Activated B cell treated with CpG ODN at 0.5 μM for 24 hours (primary cell): ENCODE measurements at regions of chr10 and their contacts with region 1.

Region 1: GRCh38 chr10:101441541-101442455 is 87.8 kb downstream of the BTRC start:
- DNase-seq: no peak
- ATAC-seq: peak; percentile 77
- H3K4me3 Mint-ChIP-seq: no peak overlapping the region
- H3K27ac Mint-ChIP-seq: no peak overlapping the region
- H3K4me1 Mint-ChIP-seq: peaks cover 3% of the 10 kb centered on the region
- H3K27me3 Mint-ChIP-seq: no peaks in the 10 kb centered on the region
- CTCF ChIP-seq: no peak

Region 2: DNA sequence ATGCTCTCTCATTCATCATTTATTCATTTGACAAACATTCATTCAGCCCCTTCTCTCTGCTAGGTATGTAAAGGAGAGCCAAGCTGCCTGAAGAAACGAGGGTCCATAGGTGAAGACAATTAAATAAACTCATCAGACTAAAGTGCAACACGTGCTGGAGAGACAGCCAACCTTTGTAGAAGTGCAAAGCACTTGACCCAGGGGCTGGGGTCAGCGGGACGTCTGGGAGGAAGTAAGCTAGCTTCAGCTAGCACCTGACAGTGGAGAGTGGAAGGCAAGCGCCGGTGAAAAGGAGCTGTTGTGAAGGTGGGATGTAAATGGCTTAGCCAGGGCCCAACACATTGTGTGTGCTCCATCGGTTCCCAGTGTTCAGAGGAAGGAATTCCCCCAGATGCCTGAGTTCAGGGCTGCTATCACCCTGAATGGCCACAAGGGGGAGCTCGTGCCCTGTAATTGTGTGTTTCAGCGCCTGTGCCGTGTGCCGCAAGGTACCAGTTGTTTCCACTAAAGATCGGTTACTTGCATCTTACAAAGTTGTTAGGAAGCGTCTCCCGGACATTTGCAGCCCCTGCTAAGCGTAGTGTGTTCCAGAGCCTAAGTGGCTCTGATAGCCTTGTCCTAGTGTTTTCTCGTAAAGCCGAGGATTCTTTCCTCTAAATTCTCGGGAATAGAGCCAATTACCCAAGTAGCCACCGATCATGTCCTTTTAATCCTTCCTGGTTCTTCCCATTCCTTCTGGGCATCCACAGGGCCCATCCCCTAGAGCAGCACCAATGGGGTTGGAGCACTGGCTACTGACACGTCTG is 280.1 kb before region 1 on chr10:
- CTCF ChIA-PET with region 1: no interaction called
- POLR2A ChIA-PET with region 1: no interaction called
- intact Hi-C with region 1: loop called (anchors 5 kb)
- DNase-seq: peak; percentile 47
- ATAC-seq: peak; percentile 94
- H3K4me3 Mint-ChIP-seq: no peak overlapping the region
- H3K27ac Mint-ChIP-seq: no peak overlapping the region
- H3K4me1 Mint-ChIP-seq: peaks cover 15% of the 10 kb centered on the region
- H3K27me3 Mint-ChIP-seq: peaks cover 59% of the 10 kb centered on the region
- CTCF ChIP-seq: peak; percentile 32

Region 3: DNA sequence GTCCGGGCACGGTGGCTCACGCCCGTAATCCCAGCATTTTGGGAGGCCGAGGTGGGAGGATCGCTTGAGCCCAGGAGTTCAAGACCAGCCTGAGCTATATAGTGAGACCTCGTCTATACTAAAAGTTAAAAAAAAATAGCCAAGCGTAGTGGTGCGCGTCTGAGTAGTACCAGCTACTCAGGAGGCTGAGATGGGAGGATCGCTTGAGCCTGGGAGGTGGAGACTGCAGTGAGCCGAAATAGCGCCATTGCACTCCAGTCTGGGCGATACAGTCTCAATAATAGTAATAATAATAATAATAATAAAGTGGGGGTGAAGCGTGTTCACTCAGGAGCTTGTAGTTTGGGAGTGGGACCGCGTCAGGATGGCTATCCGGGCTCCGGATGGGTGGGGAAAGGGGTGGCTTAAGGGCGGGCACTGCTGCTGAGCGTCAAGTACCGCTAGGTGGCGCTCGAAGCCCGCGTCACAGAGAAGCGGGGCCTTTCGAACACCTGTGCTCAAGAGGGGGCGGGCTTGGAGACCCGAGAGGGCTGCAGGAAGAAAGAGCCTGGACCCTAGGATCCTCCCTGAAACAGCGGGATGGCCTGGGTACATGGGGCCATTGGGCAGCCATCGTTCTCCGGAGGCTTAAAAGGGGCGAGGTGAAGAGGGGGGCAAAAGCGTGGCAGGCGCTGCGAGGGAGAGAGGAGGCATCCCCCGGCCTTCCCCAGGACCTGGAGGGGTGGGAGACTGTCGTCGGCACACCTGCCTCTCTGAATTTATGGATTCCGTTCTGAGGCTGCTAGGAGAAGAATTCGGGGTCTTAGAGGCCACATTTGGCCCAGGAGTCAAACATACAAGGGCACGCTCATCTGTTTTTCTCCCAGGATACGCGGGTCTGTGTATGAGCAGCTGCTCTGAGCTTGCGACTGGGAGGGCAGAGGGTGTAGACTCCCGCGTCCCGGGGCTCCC is 227.1 kb before region 1 on chr10:
- CTCF ChIA-PET with region 1: interaction called, 13 read pairs
- POLR2A ChIA-PET with region 1: no interaction called
- intact Hi-C with region 1: loop called (anchors 1 kb)
- DNase-seq: peak; percentile 72
- ATAC-seq: peak; percentile 75
- H3K4me3 Mint-ChIP-seq: peak overlapping the region; percentile 60
- H3K27ac Mint-ChIP-seq: peak overlapping the region; percentile 68
- H3K4me1 Mint-ChIP-seq: peaks cover 32% of the 10 kb centered on the region
- H3K27me3 Mint-ChIP-seq: peaks cover 56% of the 10 kb centered on the region
- CTCF ChIP-seq: peak; percentile 73

Region 4: DNA sequence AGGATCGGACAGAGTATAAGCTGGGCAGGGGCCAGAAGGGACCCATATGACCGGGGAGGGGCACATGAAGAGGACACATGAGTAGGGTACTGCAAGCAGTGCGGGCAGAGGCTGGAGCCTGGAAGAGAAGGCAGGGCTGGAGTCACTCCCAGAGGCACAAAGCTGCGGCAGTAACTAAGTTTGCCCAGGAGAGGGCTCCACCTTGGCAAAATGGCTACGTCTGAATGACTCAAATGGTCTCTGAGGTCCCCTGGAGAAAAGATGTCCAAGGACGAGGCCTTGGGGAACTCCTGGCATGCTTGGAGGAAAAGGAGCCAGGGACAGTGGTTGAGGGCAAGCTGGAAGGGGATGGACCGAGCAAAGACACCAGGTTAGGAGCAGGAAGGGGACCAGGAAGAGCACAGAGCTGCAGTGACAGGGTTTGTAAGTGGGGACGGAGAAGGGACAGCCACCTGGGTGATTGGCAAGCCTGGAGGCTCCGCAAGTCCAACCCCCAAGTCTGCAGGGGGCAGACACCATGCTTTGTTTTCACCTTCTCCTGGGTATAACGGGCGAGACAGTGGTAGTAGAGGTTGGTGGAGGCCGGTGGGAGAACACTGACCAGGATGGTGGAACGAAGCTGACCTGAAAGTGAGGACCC is 169.4 kb before region 1 on chr10:
- CTCF ChIA-PET with region 1: interaction called, 17 read pairs
- POLR2A ChIA-PET with region 1: no interaction called
- intact Hi-C with region 1: loop called (anchors 1 kb)
- DNase-seq: peak; percentile 41
- ATAC-seq: peak; percentile 67
- H3K4me3 Mint-ChIP-seq: no peak overlapping the region
- H3K27ac Mint-ChIP-seq: no peak overlapping the region
- H3K4me1 Mint-ChIP-seq: no peaks in the 10 kb centered on the region
- H3K27me3 Mint-ChIP-seq: peaks cover 40% of the 10 kb centered on the region
- CTCF ChIP-seq: no peak

Region 5: GRCh38 chr10:101291331-101292193 is 150.2 kb before region 1 on chr10:
- CTCF ChIA-PET with region 1: interaction called, 5 read pairs
- POLR2A ChIA-PET with region 1: no interaction called
- intact Hi-C with region 1: loop called (anchors 5 kb)
- DNase-seq: peak; percentile 34
- ATAC-seq: peak; percentile 71
- H3K4me3 Mint-ChIP-seq: peak overlapping the region; percentile 79
- H3K27ac Mint-ChIP-seq: no peak overlapping the region
- H3K4me1 Mint-ChIP-seq: peaks cover 13% of the 10 kb centered on the region
- H3K27me3 Mint-ChIP-seq: peaks cover 64% of the 10 kb centered on the region
- CTCF ChIP-seq: no peak

Region 6: GRCh38 chr10:101414034-101414433 is 27.8 kb before region 1 on chr10:
- CTCF ChIA-PET with region 1: no interaction called
- POLR2A ChIA-PET with region 1: no interaction called
- intact Hi-C with region 1: no loop called
- DNase-seq: no peak
- ATAC-seq: no peak
- H3K4me3 Mint-ChIP-seq: no peak overlapping the region
- H3K27ac Mint-ChIP-seq: no peak overlapping the region
- H3K4me1 Mint-ChIP-seq: peaks cover 20% of the 10 kb centered on the region
- H3K27me3 Mint-ChIP-seq: no peaks in the 10 kb centered on the region
- CTCF ChIP-seq: no peak

Region 7: GRCh38 chr10:101453791-101454718 is 12.3 kb after region 1 on chr10:
- CTCF ChIA-PET with region 1: interaction called, 10 read pairs
- POLR2A ChIA-PET with region 1: interaction called, 3 read pairs
- intact Hi-C with region 1: no loop called
- DNase-seq: no peak
- ATAC-seq: no peak
- H3K4me3 Mint-ChIP-seq: no peak overlapping the region
- H3K27ac Mint-ChIP-seq: no peak overlapping the region
- H3K4me1 Mint-ChIP-seq: peaks cover 20% of the 10 kb centered on the region
- H3K27me3 Mint-ChIP-seq: no peaks in the 10 kb centered on the region
- CTCF ChIP-seq: no peak